Activated CD8-positive, alpha-beta memory T cell treated with anti-CD3 and anti-CD28 coated beads, Interleukin-2, amount 10 ng/mL, durations not matched to agents 7 days and 5 days (primary cell): ENCODE measurements at regions of chr1 and their contacts with region 1.

Region 1: GRCh38 chr1:115980998-115981993 is 5.0 kb downstream of the SLC22A15 start:
- DNase-seq: no peak
- ATAC-seq: peak; percentile 58
- H3K4me3 Mint-ChIP-seq: no peak overlapping the region
- H3K27ac Mint-ChIP-seq: no peak overlapping the region
- H3K4me1 Mint-ChIP-seq: peaks cover 10% of the 10 kb centered on the region
- H3K27me3 Mint-ChIP-seq: peaks cover 17% of the 10 kb centered on the region

Region 2: GRCh38 chr1:115802416-115802815 is 178.9 kb before region 1 on chr1:
- CTCF ChIA-PET with region 1: interaction called, 61 read pairs
- DNase-seq: no peak
- ATAC-seq: no peak
- H3K4me3 Mint-ChIP-seq: no peak overlapping the region
- H3K27ac Mint-ChIP-seq: no peak overlapping the region
- H3K4me1 Mint-ChIP-seq: no peaks in the 10 kb centered on the region
- H3K27me3 Mint-ChIP-seq: peaks cover 10% of the 10 kb centered on the region

Region 3: GRCh38 chr1:115807723-115808122 is 173.6 kb before region 1 on chr1:
- CTCF ChIA-PET with region 1: interaction called, 61 read pairs
- DNase-seq: peak; percentile 61
- ATAC-seq: no peak
- H3K4me3 Mint-ChIP-seq: no peak overlapping the region
- H3K27ac Mint-ChIP-seq: no peak overlapping the region
- H3K4me1 Mint-ChIP-seq: peaks cover 1% of the 10 kb centered on the region
- H3K27me3 Mint-ChIP-seq: peaks cover 5% of the 10 kb centered on the region

Region 4: DNA sequence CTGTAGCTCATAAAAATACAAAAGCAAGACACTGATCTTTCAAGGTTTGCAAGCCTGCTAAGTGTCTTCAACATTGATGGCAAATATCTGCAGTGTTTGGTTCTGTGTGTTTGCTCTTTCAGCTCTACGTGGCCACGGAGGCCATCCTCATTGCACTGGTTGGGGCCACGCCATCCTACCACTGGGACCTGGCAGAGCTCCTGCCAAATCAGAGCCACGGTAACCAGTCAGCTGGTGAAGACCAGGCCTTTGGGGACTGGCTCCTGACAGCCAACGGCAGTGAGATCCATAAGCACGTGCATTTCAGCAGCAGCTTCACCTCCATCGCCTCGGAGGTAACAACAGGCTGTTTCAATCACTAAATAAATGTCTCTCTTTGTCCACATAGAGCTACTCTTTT is 10.6 kb after region 1 on chr1:
- CTCF ChIA-PET with region 1: interaction called, 11 read pairs
- DNase-seq: no peak
- ATAC-seq: no peak
- H3K4me3 Mint-ChIP-seq: no peak overlapping the region
- H3K27ac Mint-ChIP-seq: no peak overlapping the region
- H3K4me1 Mint-ChIP-seq: peaks cover 6% of the 10 kb centered on the region
- H3K27me3 Mint-ChIP-seq: peaks cover 2% of the 10 kb centered on the region

Region 5: GRCh38 chr1:116006486-116006964 is 25.2 kb after region 1 on chr1:
- CTCF ChIA-PET with region 1: interaction called, 13 read pairs
- DNase-seq: no peak
- ATAC-seq: peak; percentile 94
- H3K4me3 Mint-ChIP-seq: peak overlapping the region; percentile 79
- H3K27ac Mint-ChIP-seq: peak overlapping the region; percentile 87
- H3K4me1 Mint-ChIP-seq: peaks cover 15% of the 10 kb centered on the region
- H3K27me3 Mint-ChIP-seq: peaks cover under 1% of the 10 kb centered on the region

Region 6: GRCh38 chr1:116110567-116111523 is 129.5 kb after region 1 on chr1 and contains the start of gene MAB21L3:
- CTCF ChIA-PET with region 1: no interaction called
- DNase-seq: no peak
- ATAC-seq: no peak
- H3K4me3 Mint-ChIP-seq: no peak within 1 kb of the TSS
- H3K27ac Mint-ChIP-seq: no peak within 1 kb of the TSS
- H3K4me1 Mint-ChIP-seq: no peaks in the 10 kb centered on the region
- H3K27me3 Mint-ChIP-seq: peaks cover 20% of the 10 kb centered on the region
- total RNA-seq, gene MAB21L3: not detected